ENCODE measurements at regions of chrX and their contacts with region 1.

Region 1: GRCh38 chrX:123960042-123960611 is 1.4 kb upstream of the STAG2 start:
- DNase-seq: peak; percentile 84
- H3K4me3 Mint-ChIP-seq: peak overlapping the region; percentile 99
- H3K27ac Mint-ChIP-seq: peak overlapping the region; percentile 100
- H3K4me1 Mint-ChIP-seq: peaks cover 15% of the 10 kb centered on the region
- H3K27me3 Mint-ChIP-seq: no peaks in the 10 kb centered on the region

Region 2: DNA sequence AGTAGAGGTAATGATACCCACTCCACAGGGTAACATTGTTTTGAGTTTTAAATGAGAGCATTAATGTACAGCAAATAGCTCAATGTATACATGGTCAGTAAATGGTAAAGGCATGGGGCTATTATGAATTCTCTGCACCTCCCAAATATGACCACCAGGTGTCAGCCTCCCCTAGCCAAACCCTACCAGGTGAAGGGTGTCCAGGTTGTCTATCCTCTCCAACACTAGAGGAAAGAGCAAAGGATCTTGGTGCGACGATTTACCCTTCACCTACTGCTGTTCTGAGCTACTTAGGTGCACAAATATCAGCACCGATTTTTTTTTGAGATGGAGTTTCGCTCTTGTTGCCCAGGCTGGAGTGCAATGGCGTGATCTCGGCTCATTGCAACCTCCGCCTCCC is 126.7 kb before region 1 on chrX:
- intact Hi-C with region 1: loop called (anchors 5 kb)
- DNase-seq: peak; percentile 36
- H3K4me3 Mint-ChIP-seq: no peak overlapping the region
- H3K27ac Mint-ChIP-seq: no peak overlapping the region
- H3K4me1 Mint-ChIP-seq: peaks cover 3% of the 10 kb centered on the region
- H3K27me3 Mint-ChIP-seq: peaks cover 8% of the 10 kb centered on the region

Region 3: GRCh38 chrX:123878252-123878721 is 81.8 kb before region 1 on chrX:
- intact Hi-C with region 1: loop called (anchors 5 kb)
- DNase-seq: no peak
- H3K4me3 Mint-ChIP-seq: peak overlapping the region; percentile 37
- H3K27ac Mint-ChIP-seq: peak overlapping the region; percentile 58
- H3K4me1 Mint-ChIP-seq: peaks cover 20% of the 10 kb centered on the region
- H3K27me3 Mint-ChIP-seq: no peaks in the 10 kb centered on the region

Region 4: DNA sequence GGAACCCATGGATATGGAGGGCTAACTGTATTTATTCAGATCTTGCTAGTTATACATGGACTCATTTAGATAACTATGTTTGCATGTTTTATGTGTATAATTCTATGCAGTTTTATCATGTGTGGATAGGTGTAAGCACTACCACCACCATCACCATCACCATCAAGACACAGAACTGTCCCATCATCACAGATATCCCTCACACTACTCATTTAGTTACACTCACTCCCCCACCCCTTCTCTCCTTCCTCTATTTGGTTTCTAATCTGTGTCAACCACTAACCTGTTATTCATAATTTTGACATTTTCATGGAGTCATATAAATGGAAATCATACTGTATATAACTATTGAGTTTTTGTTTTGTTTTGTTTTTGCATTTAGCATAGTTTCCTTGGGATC is 45.1 kb after region 1 on chrX:
- intact Hi-C with region 1: loop called (anchors 5 kb)
- DNase-seq: no peak
- H3K4me3 Mint-ChIP-seq: no peak overlapping the region
- H3K27ac Mint-ChIP-seq: peak overlapping the region; percentile 14
- H3K4me1 Mint-ChIP-seq: peaks cover 27% of the 10 kb centered on the region
- H3K27me3 Mint-ChIP-seq: no peaks in the 10 kb centered on the region

Region 5: DNA sequence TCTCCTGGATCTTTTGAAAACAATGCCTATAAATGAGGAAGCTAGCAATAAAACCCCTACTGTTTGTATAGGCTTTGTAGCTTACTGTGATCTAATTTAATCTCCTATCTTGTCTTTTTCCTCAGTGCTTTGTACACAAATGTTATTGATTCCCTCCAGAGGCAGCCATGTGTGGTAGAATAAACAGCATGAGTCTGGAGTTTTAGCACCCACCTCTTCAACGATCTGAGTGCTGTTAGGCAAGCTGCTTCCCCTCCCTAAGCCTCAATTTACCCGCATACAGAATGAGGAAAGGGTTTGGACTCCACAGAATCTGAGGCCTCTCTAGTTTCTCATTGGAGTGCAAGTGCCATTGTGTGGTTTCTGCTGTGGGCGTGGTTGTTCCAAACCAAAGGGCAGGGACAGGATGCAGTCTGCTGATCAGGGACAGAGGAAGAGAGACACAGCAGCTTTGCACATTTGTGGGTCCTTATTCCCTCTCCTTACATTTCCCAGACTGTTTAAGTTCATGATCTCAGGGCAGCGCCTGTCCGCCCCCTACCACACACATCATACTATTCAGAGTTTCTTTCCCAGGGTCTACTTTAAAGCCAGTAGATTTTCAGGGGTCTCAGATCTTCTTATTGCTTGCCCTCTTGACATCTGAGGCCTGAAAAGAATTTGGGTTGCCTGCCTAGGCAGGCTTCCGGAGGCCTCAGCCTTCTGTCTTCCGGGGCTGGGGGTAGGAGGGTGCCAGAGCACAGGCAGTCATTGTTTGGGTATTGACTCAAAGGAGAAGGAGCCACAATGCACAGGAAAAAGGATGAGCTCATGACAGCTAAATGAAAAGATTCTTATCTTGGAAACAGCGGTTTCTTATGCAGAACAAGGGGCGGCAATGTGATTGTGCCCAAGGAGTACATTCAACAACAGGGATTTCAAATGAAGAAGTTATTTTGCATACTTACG is 257.5 kb after region 1 on chrX:
- intact Hi-C with region 1: loop called (anchors 2 kb)
- DNase-seq: peak; percentile 69
- H3K4me3 Mint-ChIP-seq: peak overlapping the region; percentile 72
- H3K27ac Mint-ChIP-seq: peak overlapping the region; percentile 96
- H3K4me1 Mint-ChIP-seq: peaks cover 80% of the 10 kb centered on the region
- H3K27me3 Mint-ChIP-seq: no peaks in the 10 kb centered on the region

Region 6: GRCh38 chrX:124346117-124346876 is 386.2 kb after region 1 on chrX and contains the start of gene SH2D1A:
- intact Hi-C with region 1: loop called (anchors 2 kb)
- DNase-seq: peak; percentile 24
- H3K4me3 Mint-ChIP-seq: peak within 1 kb of the TSS; percentile 94
- H3K27ac Mint-ChIP-seq: peak within 1 kb of the TSS; percentile 99
- H3K4me1 Mint-ChIP-seq: peaks cover 45% of the 10 kb centered on the region
- H3K27me3 Mint-ChIP-seq: no peaks in the 10 kb centered on the region
- total RNA-seq, gene SH2D1A: 54.9 and 57.7 TPM in 2 replicates

Region 7: GRCh38 chrX:124594017-124594651 is 634.0 kb after region 1 on chrX:
- intact Hi-C with region 1: no loop called
- DNase-seq: no peak
- H3K4me3 Mint-ChIP-seq: no peak overlapping the region
- H3K27ac Mint-ChIP-seq: no peak overlapping the region
- H3K4me1 Mint-ChIP-seq: no peaks in the 10 kb centered on the region
- H3K27me3 Mint-ChIP-seq: no peaks in the 10 kb centered on the region

Measured in activated T-helper 2 cell treated with anti-CD3 and anti-CD28 coated beads, Interferon-gamma antibody, Interleukin-2, Interleukin-4, amounts not matched to agents 10 μg/mL and 5 μg/mL and 100 μg/mL, durations not matched to agents 14 hours and 24 hours and 36 hours (primary cell).